ENCODE measurements at regions of chr5 and their contacts with region 1.

Region 1: GRCh38 chr5:112551419-112552032 is 132.4 kb upstream of the EPB41L4A start:
- DNase-seq: peak in 2 of 10 donors; percentile 20 to 45

Region 2: DNA sequence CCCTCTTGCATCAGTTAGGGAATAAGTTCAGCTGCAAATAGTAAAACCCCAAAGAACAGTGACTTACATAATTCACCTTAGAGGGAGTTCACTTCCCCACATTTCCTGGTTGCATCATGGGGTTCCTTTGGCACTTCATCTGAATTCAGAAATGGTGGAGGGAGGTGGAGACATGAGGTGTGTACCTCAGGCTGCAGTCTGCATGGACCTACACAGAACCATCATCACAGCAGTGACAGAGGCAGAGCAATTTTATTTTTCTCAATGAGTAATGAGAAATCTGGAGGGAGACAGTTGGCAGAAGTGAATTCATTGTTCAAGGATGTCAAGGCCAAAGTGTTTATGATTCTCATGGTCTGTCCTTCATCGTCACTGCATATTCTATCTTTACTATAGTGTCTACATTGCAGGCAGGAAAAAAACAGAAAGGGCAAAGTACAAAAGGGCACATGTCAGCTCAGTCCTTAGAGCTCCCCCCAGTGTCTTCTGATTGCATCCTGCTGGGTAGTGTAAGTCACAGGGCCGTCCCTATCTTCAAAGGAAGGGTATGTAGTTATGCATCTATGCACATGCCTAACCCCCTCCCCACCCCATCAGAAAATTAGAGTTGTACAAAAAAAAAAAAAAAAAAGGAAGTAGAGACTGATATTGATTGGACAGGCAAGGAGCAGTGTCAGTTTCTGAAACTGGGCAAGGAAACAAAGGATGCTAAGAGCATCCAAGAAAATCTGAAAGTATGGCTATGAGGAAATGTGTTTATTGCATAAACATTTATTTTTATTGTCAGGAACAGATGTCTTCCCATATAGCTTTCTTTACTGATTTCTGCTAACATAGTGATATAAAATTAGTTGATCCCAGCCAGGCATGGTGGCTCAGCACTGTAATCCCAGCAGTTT is 53.5 kb after region 1 on chr5:
- intact Hi-C with region 1: loop called (anchors 5 kb)
- DNase-seq: peak in 1 of 10 donors; percentile 45

Region 3: DNA sequence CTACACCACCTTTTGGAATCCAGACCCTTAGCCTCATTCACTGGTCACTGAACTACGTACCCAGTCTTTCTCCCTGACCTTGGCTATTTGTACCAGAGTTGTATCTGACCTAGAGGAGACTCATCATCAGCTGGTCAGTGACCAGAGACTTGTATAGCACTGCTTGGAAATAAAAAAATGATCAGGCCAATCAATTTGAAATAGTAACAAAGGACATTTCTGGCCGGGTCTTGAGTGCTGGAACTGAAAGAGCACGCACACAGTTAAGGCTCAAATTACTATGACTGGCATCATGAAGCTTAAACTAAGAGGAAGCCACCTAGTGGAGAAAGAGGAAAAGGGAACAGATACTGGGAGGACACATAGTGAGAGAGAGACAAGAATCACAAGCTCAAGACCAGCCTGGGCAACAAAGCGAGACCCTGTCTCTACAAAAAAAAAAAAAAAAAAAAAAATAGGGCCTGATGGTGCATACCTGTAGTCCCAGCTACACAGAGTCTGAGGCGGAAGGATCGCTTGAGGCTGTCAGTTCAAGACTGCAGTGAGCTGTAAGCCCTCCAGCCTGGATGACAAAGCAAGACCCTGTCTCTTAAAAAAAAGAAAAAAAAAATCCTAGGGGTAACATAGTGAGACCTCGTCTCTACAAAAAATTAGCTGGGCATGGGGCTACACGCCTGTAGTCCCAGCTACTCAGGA is 296.7 kb after region 1 on chr5:
- intact Hi-C with region 1: loop called (anchors 5 kb)
- DNase-seq: no peak